ENCODE measurements at regions of chr1 and their contacts with region 1.

Region 1: DNA sequence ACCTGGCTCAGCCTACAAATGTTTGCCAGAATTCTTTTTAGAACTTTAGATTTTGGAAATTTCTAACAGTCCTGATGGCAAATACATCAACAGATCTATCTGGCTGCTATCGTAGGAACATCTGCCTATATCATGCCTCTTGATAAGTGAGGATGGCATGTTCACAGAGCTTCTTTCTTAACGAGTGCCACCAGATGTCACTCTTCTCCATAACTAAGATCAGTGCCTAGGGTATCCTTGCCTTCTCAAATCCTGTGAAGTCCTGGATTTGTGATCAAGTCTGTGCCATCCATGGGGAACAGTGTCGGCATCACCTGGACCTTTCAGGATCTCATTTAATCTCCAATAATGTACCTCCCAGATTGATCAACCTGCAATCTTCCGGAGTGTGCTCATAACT is 36.5 kb upstream of the CD5L start:
- DNase-seq: peak; percentile 45
- ATAC-seq: peak; percentile 84
- H3K4me3 ChIP-seq: no peak overlapping the region
- H3K27ac ChIP-seq: no peak overlapping the region
- H3K4me1 ChIP-seq: no peaks in the 10 kb centered on the region
- H3K27me3 ChIP-seq: no peaks in the 10 kb centered on the region
- CTCF ChIP-seq: peak; percentile 66
- EP300 ChIP-seq: no peak
- POLR2A ChIP-seq: no peak
- RAD21 ChIP-seq: 0 out of 2 replicates have a peak, but pooled peaks have one; percentile 22

Region 2: GRCh38 chr1:157948312-157949073 is 70.4 kb after region 1 on chr1:
- CTCF ChIA-PET with region 1: no interaction called
- POLR2A ChIA-PET with region 1: no interaction called
- in situ Hi-C with region 1: loop called (anchors 10 kb)
- intact Hi-C with region 1: loop called (anchors 1 kb)
- DNase-seq: peak; percentile 13
- ATAC-seq: peak; percentile 73
- H3K4me3 ChIP-seq: no peak overlapping the region
- H3K27ac ChIP-seq: no peak overlapping the region
- H3K4me1 ChIP-seq: no peaks in the 10 kb centered on the region
- H3K27me3 ChIP-seq: no peaks in the 10 kb centered on the region
- CTCF ChIP-seq: peak; percentile 65
- EP300 ChIP-seq: no peak
- POLR2A ChIP-seq: no peak
- RAD21 ChIP-seq: no peak

Region 3: DNA sequence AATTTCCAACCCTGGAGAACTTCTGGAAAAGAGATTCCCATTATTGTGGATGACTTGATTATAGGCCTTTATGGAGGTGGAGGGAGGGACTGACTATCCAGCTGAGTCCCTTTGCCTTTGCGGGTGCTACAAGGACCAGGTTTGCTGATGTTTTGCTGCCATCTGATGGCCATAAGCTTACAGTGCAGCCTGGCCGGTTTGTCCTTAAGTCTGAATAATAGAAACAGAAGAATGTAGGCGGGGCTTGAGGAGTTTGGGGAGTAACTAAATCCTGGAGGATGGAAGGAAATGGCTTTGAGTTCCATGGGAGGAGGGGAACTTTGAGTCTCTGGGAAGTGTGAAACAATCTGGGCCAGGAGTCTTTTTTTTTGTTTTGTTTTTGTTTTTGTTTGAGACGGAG is 246.9 kb after region 1 on chr1:
- CTCF ChIA-PET with region 1: interaction called, 8 read pairs
- POLR2A ChIA-PET with region 1: no interaction called
- in situ Hi-C with region 1: loop called (anchors 10 kb)
- intact Hi-C with region 1: loop called (anchors 2 kb)
- DNase-seq: peak; percentile 66
- ATAC-seq: peak; percentile 91
- H3K4me3 ChIP-seq: no peak overlapping the region
- H3K27ac ChIP-seq: no peak overlapping the region
- H3K4me1 ChIP-seq: no peaks in the 10 kb centered on the region
- H3K27me3 ChIP-seq: no peaks in the 10 kb centered on the region
- CTCF ChIP-seq: peak; percentile 83
- EP300 ChIP-seq: no peak
- POLR2A ChIP-seq: no peak
- RAD21 ChIP-seq: peak; percentile 68